Thyroid gland (tissue), 4 donors: ENCODE measurements at regions of chr1 and their contacts with region 1.

Region 1: GRCh38 chr1:64966158-64966971 is at the start of gene JAK1:
- DNase-seq: peak; percentile 87 to 88
- H3K4me3 ChIP-seq: peak within 1 kb of the TSS; percentile 60 to 97 (median 84)
- H3K27ac ChIP-seq: peak within 1 kb of the TSS; percentile 86 to 95 (median 95)
- H3K4me1 ChIP-seq: peaks cover 6 to 18% of the 10 kb centered on the region in 2 donors
- H3K27me3 ChIP-seq: no peaks in the 10 kb centered on the region
- CTCF ChIP-seq: peak in 3 of 6 experiments; percentile 12 to 21 (median 13)
- POLR2A ChIP-seq: peak; percentile 66 to 97
- total RNA-seq, gene JAK1: 102 to 165 (median 120) TPM

Region 2: DNA sequence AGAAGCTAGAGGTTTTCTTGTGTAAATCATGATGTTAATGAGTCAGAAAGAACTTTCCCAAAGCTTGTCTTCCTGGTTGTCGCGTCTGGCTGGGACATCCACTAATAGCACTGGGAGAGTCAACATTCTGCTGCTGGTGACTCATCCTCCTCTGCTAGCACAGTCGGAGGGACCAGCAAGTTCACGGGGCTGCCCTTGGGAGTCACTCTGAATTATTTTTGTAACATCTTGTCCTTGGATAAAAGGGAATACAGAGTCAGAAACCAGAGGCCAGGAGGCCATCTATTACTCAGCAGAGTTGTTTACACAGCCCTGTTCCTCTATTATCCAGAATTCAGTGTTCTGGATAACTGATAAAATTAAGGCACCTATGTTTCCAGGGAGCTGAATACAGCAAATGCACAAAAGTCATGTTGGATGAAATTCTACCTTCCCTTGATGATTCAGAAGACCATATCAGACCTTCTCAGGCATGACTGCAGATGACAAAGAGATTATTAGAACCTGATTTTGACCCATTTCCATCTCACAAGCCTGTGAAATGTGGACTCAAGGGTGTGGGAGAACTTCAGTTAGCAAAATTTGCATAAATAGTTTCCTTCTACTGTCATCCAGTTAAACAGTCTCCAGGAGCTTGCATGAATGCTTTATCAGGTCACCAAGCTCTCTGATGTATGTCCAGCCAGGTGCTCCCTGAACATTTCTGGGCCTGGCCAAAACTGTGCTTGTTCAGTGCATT is 68.1 kb before region 1 on chr1:
- intact Hi-C with region 1: loop called (anchors 10 kb)
- DNase-seq: peak; percentile 81 to 83
- H3K4me3 ChIP-seq: no peak overlapping the region
- H3K27ac ChIP-seq: peak overlapping the region; percentile 63 to 79 (median 68)
- H3K4me1 ChIP-seq: peaks cover 20 to 39% of the 10 kb centered on the region in 2 donors
- H3K27me3 ChIP-seq: no peaks in the 10 kb centered on the region
- CTCF ChIP-seq: no peak
- POLR2A ChIP-seq: no peak

Region 3: GRCh38 chr1:65067491-65068201 is 101.3 kb after region 1 on chr1:
- intact Hi-C with region 1: loop called (anchors 5 kb)
- DNase-seq: peak; percentile 72 to 73
- H3K4me3 ChIP-seq: peak overlapping the region; percentile 42 to 88 (median 77)
- H3K27ac ChIP-seq: peak overlapping the region; percentile 98 to 100 (median 99)
- H3K4me1 ChIP-seq: peaks cover 13 to 23% of the 10 kb centered on the region in 2 donors
- H3K27me3 ChIP-seq: no peaks in the 10 kb centered on the region
- CTCF ChIP-seq: no peak
- POLR2A ChIP-seq: peak; percentile 48 to 79